Activated naive CD8-positive, alpha-beta T cell treated with anti-CD3 and anti-CD28 coated beads, Interleukin-2, amount 10 ng/mL, durations not matched to agents 7 days and 5 days (primary cell): ENCODE measurements at regions of chr15 and their contacts with region 1.

Region 1: DNA sequence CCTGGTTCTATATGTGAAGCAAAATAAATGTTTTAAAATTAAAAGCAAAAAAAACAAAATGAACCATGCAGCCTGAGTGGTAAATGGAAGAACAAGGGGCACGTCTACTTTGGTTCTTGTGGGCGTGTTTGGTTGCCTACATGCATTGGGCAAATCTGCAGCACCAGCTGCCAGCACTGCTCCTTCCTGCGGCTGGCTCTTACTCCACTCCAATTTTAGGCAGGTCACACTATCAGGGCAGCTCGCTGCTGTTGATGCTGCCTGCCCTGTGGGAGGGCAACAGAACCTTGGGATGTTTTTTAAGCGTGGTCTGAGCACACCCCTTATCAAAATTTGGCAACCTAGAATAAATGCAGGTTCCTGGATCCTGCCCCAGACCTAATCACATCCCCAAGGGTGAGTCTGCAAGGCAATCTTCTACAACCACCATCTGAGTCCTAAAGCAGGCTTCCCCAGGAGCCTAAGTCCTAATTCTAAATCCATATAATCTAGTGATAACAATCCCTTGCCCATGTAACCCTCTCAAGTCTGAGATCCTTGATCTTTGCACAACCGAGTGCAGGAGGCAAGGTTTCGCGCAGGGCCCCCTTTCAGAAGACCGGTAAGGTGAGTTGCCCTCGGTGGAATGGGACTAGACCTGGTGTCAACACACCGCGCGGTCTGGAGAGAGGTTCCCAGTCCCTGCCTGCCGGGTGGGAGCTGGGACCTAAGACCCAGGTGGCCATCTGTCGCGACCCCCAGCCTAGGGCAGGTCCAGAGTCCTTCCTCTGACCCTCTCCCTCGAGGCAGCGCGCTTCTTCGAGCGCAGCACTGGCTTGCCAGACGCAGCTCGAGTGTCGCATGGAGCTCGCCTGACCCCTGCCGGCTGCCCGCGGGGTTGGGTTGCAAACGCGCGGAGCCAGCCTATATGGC is 15.9 kb downstream of the IVD start:
- DNase-seq: peak; percentile 91
- ATAC-seq: peak; percentile 97
- H3K4me3 Mint-ChIP-seq: peak overlapping the region; percentile 10
- H3K27ac Mint-ChIP-seq: no peak overlapping the region
- H3K4me1 Mint-ChIP-seq: peaks cover 4% of the 10 kb centered on the region
- H3K27me3 Mint-ChIP-seq: no peaks in the 10 kb centered on the region

Region 2: DNA sequence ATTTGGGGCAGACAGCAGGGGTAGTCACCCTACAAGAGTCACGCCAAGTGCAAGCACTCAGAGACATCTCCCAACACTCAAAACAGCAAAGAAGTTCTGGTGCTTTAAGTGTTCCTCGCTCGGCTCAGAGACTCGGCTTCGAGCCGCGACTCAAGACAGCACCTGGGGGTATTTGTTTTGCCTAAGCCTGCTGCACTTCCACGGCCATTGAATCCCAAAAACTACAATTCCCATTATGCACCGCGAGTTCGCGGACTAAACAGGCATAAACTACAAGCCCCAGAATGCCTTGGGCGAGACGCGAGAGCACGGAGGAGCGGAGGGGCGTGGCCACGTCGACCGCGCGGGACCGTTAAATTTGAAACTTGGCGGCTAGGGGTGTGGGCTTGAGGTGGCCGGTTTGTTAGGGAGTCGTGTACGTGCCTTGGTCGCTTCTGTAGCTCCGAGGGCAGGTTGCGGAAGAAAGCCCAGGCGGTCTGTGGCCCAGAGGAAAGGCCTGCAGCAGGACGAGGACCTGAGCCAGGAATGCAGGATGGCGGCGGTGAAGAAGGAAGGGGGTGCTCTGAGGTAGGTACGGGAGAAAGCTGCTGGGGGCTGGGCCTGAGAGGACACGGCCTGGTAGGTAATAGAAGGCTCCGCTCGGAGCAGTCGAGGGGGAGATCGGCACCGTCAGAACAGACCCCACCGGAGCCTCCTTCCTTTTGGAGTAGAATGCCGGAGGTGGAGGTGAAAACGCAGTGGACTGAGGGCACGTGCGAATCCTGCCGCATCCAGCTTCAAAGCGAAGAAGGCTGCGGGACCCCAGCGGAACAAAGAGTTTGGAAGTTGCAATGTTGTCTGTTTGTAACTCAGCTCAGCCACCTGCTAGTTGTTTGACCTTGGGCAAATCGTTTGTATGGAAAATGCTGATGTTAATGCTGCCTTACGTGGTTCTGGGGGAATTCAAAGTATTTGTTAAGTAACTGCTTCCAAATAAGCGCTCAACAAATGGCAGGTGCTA is 260.5 kb before region 1 on chr15 and contains the start of gene BUB1B:
- POLR2A ChIA-PET with region 1: no interaction called
- DNase-seq: peak; percentile 92
- ATAC-seq: peak; percentile 92
- H3K4me3 Mint-ChIP-seq: no peak within 1 kb of the TSS
- H3K27ac Mint-ChIP-seq: no peak within 1 kb of the TSS
- H3K4me1 Mint-ChIP-seq: peaks cover 10% of the 10 kb centered on the region
- H3K27me3 Mint-ChIP-seq: peaks cover 2% of the 10 kb centered on the region
- total RNA-seq, gene BUB1B: 59.3 TPM

Region 3: DNA sequence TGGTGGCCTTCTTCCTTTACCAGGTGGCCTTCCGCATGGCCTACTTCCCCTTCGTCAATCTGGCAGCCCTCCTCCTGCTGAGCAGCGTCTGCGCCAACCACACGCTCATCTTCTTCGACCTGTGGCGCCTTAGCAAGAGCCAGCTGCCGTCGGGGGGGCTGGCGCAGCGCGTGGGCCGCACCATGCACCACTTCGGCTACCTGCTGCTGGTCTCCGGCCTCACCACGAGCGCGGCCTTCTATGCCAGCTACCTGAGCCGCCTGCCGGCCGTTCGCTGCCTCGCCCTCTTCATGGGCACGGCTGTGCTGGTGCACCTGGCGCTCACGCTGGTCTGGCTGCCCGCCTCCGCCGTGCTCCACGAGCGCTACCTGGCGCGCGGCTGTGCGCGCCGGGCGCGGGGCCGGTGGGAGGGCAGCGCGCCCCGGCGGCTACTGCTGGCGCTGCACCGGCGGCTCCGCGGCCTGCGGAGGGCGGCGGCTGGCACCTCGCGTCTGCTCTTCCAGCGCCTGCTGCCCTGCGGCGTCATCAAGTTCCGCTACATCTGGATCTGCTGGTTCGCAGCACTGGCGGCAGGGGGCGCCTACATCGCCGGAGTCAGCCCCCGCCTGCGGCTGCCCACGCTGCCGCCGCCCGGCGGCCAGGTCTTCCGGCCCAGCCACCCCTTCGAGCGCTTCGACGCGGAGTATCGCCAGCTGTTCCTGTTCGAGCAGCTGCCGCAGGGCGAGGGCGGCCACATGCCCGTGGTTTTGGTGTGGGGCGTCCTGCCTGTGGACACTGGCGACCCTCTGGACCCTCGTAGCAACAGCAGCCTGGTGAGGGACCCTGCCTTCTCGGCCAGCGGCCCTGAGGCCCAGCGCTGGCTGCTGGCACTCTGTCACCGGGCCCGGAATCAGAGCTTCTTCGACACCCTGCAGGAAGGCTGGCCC is 53.6 kb before region 1 on chr15:
- POLR2A ChIA-PET with region 1: interaction called, 22 read pairs
- DNase-seq: peak; percentile 91
- ATAC-seq: peak; percentile 94
- H3K4me3 Mint-ChIP-seq: peak overlapping the region; percentile 80
- H3K27ac Mint-ChIP-seq: peak overlapping the region; percentile 78
- H3K4me1 Mint-ChIP-seq: peaks cover 14% of the 10 kb centered on the region
- H3K27me3 Mint-ChIP-seq: peaks cover 15% of the 10 kb centered on the region